ENCODE measurements at regions of chr7 and their contacts with region 1.

Region 1: DNA sequence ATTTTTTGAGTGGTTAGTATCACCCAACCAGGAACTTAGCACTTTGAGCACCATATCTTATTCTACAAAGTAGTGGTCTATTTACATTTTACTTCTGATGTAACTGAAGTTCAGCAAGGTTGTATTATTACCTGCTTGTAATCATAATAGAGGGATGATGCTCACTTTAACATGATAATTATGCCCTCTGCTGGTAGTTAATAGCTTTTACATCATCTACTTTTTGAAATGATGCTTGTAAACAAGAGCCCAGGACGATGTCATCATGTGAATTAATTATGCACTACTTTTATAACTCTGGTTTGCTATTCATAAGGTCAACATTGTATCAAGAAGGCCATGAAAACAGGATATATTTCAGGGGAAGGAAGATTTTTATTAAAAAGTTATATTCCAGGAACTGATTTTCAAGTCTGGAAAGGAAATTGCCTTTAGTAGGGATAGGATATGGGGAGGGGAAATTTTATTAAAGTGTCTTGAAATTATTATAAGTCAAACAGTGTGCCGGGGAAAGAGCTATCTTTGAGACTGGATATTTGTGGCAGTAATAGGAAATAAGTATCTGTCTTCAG is 80.3 kb upstream of the SCIN start:
- DNase-seq: peak; percentile 59
- H3K4me3 ChIP-seq: no peak overlapping the region
- H3K27ac ChIP-seq: no peak overlapping the region
- H3K4me1 ChIP-seq: no peaks in the 10 kb centered on the region; a peak in 1 of 4 replicates
- H3K27me3 ChIP-seq: no peaks in the 10 kb centered on the region
- CTCF ChIP-seq: peak; percentile 82
- EP300 ChIP-seq: no peak
- RAD21 ChIP-seq: peak; percentile 74

Region 2: GRCh38 chr7:12389089-12389700 is 101.0 kb before region 1 on chr7:
- CTCF ChIA-PET with region 1: interaction called, 11 read pairs
- POLR2A ChIA-PET with region 1: no interaction called
- DNase-seq: peak; percentile 65
- H3K4me3 ChIP-seq: no peak overlapping the region; a peak in 1 of 4 replicates
- H3K27ac ChIP-seq: no peak overlapping the region; a peak in 1 of 4 replicates
- H3K4me1 ChIP-seq: peaks cover 0 to 8% of the 10 kb centered on the region in 2 experiments; a peak in 2 of 4 replicates
- H3K27me3 ChIP-seq: no peaks in the 10 kb centered on the region
- CTCF ChIP-seq: peak; percentile 97
- EP300 ChIP-seq: no peak
- RAD21 ChIP-seq: peak; percentile 75

Region 3: DNA sequence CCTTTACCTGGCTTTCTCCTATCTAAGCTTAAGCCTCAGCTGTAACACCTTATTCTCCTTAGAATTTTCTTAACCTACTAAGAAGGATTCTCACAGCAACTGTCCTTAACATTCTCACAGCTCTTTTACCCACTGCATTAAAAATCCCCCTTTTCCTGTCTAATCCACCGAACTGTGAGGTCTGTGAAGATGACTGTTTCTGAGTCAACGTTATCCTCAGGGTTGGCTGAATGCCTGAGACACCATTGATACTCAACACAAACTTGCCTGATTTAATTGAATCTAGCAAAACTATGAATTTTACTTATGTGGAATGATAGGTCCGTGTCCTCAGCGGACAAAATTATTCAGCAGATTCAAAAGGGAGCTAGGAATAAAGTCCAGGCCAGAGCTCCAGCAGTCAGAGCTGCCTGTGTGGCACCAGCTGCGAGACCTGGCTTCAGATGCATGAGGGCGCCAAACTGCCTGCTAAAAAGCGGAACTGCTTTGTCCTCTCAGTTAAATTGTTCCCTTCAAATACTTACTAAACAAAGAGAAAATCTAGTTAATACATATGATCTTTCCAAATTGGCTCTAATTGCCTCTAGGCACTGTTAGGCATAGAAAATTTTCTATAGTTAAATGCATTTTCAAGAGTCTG is 53.2 kb before region 1 on chr7:
- CTCF ChIA-PET with region 1: interaction called, 41 read pairs
- POLR2A ChIA-PET with region 1: no interaction called
- DNase-seq: peak; percentile 28
- H3K4me3 ChIP-seq: no peak overlapping the region
- H3K27ac ChIP-seq: peak overlapping the region in 1 of 2 experiments; percentile 43; a peak in 2 of 4 replicates
- H3K4me1 ChIP-seq: peaks cover 0 to 5% of the 10 kb centered on the region in 2 experiments; a peak in 2 of 4 replicates
- H3K27me3 ChIP-seq: 0 out of 2 replicates have a peak, but pooled peaks cover 4% of the 10 kb centered on the region
- CTCF ChIP-seq: peak; percentile 27; the same call in 1 of the 2 replicates
- EP300 ChIP-seq: no peak
- RAD21 ChIP-seq: peak; percentile 59

Region 4: DNA sequence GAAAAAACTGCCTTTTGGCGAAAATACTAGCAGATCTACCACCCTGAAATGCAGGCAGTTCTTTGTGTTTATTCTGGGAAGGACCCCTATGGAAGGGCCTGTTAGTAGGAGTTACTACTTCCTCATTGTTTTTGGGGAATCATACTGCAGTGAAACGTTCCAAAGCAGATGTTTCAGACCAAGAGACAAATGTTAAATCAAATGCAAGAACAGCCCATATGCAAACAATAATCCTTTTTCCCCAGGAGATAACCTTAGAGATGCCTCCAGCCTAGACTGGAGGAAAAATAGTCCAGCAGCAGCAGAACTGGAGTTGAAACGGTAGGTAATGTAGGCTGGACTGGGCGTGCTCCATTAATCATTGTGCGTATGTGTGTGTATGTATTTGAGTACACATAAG is 20.6 kb before region 1 on chr7:
- CTCF ChIA-PET with region 1: interaction called, 38 read pairs
- POLR2A ChIA-PET with region 1: no interaction called
- DNase-seq: no peak
- H3K4me3 ChIP-seq: no peak overlapping the region
- H3K27ac ChIP-seq: no peak overlapping the region
- H3K4me1 ChIP-seq: no peaks in the 10 kb centered on the region
- H3K27me3 ChIP-seq: no peaks in the 10 kb centered on the region
- CTCF ChIP-seq: no peak
- EP300 ChIP-seq: no peak
- RAD21 ChIP-seq: no peak

Region 5: DNA sequence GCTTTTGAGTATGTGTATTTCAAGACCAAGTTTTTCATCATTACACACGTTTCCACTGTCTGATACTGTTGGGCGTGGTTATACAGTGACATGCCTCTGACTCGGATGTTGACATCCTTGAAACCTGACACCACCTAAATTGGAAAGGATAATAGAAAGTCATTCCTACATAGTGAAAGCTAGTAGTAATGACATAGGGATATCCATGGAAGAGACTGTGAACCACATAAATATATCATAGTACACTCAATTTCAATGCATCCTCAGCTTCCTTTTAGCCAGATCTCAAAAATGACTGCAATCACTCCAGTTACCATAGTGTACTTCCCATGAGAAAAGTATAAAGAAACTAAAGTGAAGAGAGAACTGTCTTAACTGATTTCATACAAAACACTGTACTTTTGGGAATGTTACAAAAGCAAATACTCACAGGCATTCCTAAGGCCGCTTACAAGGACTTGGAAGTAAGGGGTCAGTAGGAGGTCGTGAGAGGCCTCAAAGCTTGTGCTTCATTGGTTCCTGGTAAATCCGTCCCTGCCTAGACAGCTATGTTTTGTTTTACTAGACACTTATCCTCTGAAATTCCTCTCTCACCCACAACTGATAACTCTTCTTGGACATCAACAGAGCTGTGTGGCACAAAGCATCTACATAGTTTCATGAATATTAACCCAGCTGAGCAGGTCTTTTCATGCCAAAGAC is 14.7 kb before region 1 on chr7:
- CTCF ChIA-PET with region 1: interaction called, 38 read pairs
- POLR2A ChIA-PET with region 1: no interaction called
- DNase-seq: no peak
- H3K4me3 ChIP-seq: no peak overlapping the region
- H3K27ac ChIP-seq: no peak overlapping the region
- H3K4me1 ChIP-seq: no peaks in the 10 kb centered on the region
- H3K27me3 ChIP-seq: no peaks in the 10 kb centered on the region; the same call in 1 of the 2 replicates
- CTCF ChIP-seq: no peak
- EP300 ChIP-seq: no peak
- RAD21 ChIP-seq: no peak

Region 6: GRCh38 chr7:12504149-12504548 is 13.9 kb after region 1 on chr7:
- CTCF ChIA-PET with region 1: interaction called, 12 read pairs
- POLR2A ChIA-PET with region 1: no interaction called
- DNase-seq: no peak
- H3K4me3 ChIP-seq: no peak overlapping the region
- H3K27ac ChIP-seq: no peak overlapping the region
- H3K4me1 ChIP-seq: no peaks in the 10 kb centered on the region
- H3K27me3 ChIP-seq: no peaks in the 10 kb centered on the region
- CTCF ChIP-seq: no peak
- EP300 ChIP-seq: no peak
- RAD21 ChIP-seq: no peak

Region 7: GRCh38 chr7:12802098-12802497 is 311.9 kb after region 1 on chr7:
- CTCF ChIA-PET with region 1: no interaction called
- POLR2A ChIA-PET with region 1: no interaction called
- DNase-seq: no peak
- H3K4me3 ChIP-seq: no peak overlapping the region
- H3K27ac ChIP-seq: no peak overlapping the region
- H3K4me1 ChIP-seq: no peaks in the 10 kb centered on the region
- H3K27me3 ChIP-seq: no peaks in the 10 kb centered on the region
- CTCF ChIP-seq: no peak
- EP300 ChIP-seq: no peak
- RAD21 ChIP-seq: no peak